Activated naive CD4-positive, alpha-beta T cell treated with anti-CD3 and anti-CD28 coated beads for 36 hours (primary cell): ENCODE measurements at regions of chr1 and their contacts with region 1.

Region 1: GRCh38 chr1:64744492-64745180 is at the start of gene RAVER2:
- DNase-seq: peak; percentile 78
- H3K4me3 Mint-ChIP-seq: peak within 1 kb of the TSS; percentile 80
- H3K27ac Mint-ChIP-seq: peak within 1 kb of the TSS; percentile 36
- H3K4me1 Mint-ChIP-seq: peaks cover 7% of the 10 kb centered on the region
- H3K27me3 Mint-ChIP-seq: peaks cover 3% of the 10 kb centered on the region
- total RNA-seq, gene RAVER2: 2.3 to 2.5 TPM

Region 2: DNA sequence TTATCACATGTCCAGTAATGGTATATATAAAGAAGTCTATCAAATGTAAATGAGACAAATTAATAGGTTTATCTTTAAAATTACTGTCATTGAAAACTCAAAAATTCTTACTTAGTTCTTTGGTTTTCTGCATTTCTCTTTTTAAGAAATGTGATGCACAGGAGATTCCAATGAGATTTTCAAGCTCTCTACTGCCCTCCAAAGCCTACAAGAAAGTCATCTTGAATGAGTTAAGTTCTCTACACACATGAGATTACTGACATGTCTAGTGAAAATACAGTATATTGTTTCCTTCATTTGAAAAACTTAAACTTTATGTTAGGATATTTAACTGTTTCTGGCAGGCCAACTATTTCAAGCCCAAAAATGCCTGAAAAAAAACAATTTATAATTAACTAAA is 1290.4 kb before region 1 on chr1:
- CTCF ChIA-PET with region 1: no interaction called
- intact Hi-C with region 1: no loop called
- DNase-seq: no peak
- H3K4me3 Mint-ChIP-seq: no peak overlapping the region
- H3K27ac Mint-ChIP-seq: no peak overlapping the region
- H3K4me1 Mint-ChIP-seq: no peaks in the 10 kb centered on the region
- H3K27me3 Mint-ChIP-seq: no peaks in the 10 kb centered on the region

Region 3: DNA sequence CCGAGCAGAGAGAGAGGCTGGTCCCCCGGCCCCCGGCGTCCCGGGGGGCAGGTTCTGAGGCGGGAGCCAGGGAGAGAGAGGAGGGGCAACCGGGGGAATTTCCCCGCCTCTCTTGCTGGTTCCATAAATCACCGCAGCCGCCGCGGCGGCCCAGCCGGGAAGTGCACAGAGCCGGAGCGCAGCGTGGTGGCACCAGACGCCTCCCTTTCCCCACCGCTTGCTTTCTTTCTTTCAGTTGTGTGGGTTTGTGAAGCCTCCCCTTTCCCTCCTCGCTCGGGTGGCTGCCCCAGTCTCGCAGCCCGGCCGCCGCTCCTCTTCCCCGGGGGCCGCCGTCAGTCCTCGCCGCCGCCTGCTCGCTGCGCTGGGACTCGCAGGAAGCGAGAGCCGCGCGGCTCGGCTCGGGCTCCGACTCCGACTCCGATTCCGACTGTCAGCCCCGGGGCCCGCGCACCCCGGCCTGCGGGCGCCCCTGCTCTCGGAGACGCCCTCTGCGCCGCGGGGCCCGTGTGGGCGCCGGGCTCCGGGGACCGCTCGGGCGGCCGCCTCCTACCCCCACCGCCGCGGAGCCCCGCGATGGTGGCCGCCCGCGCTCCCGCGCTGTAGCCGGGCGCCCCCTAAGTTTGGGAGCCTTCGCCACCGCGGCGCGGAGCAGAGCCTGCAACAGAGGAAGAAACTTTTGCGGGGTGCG is 274.5 kb before region 1 on chr1 and contains the start of gene CACHD1:
- CTCF ChIA-PET with region 1: no interaction called
- intact Hi-C with region 1: loop called (anchors 2 kb)
- DNase-seq: peak; percentile 86
- H3K4me3 Mint-ChIP-seq: peak within 1 kb of the TSS; percentile 78
- H3K27ac Mint-ChIP-seq: peak within 1 kb of the TSS; percentile 3
- H3K4me1 Mint-ChIP-seq: peaks cover 14% of the 10 kb centered on the region
- H3K27me3 Mint-ChIP-seq: peaks cover 27% of the 10 kb centered on the region
- total RNA-seq, gene CACHD1: 2.6 to 2.9 TPM

Region 4: GRCh38 chr1:64956733-64957441 is 212.3 kb after region 1 on chr1:
- CTCF ChIA-PET with region 1: no interaction called
- intact Hi-C with region 1: loop called (anchors 2 kb)
- DNase-seq: peak; percentile 79
- H3K4me3 Mint-ChIP-seq: no peak overlapping the region
- H3K27ac Mint-ChIP-seq: no peak overlapping the region
- H3K4me1 Mint-ChIP-seq: peaks cover 63% of the 10 kb centered on the region
- H3K27me3 Mint-ChIP-seq: no peaks in the 10 kb centered on the region

Region 5: GRCh38 chr1:65036545-65037180 is 292.0 kb after region 1 on chr1:
- CTCF ChIA-PET with region 1: no interaction called
- intact Hi-C with region 1: loop called (anchors 1 kb)
- DNase-seq: no peak
- H3K4me3 Mint-ChIP-seq: no peak overlapping the region
- H3K27ac Mint-ChIP-seq: no peak overlapping the region
- H3K4me1 Mint-ChIP-seq: peaks cover 11% of the 10 kb centered on the region
- H3K27me3 Mint-ChIP-seq: no peaks in the 10 kb centered on the region

Region 6: GRCh38 chr1:65097076-65097475 is 352.4 kb after region 1 on chr1:
- CTCF ChIA-PET with region 1: no interaction called
- intact Hi-C with region 1: no loop called
- DNase-seq: no peak
- H3K4me3 Mint-ChIP-seq: no peak overlapping the region
- H3K27ac Mint-ChIP-seq: no peak overlapping the region
- H3K4me1 Mint-ChIP-seq: no peaks in the 10 kb centered on the region
- H3K27me3 Mint-ChIP-seq: no peaks in the 10 kb centered on the region

Region 7: DNA sequence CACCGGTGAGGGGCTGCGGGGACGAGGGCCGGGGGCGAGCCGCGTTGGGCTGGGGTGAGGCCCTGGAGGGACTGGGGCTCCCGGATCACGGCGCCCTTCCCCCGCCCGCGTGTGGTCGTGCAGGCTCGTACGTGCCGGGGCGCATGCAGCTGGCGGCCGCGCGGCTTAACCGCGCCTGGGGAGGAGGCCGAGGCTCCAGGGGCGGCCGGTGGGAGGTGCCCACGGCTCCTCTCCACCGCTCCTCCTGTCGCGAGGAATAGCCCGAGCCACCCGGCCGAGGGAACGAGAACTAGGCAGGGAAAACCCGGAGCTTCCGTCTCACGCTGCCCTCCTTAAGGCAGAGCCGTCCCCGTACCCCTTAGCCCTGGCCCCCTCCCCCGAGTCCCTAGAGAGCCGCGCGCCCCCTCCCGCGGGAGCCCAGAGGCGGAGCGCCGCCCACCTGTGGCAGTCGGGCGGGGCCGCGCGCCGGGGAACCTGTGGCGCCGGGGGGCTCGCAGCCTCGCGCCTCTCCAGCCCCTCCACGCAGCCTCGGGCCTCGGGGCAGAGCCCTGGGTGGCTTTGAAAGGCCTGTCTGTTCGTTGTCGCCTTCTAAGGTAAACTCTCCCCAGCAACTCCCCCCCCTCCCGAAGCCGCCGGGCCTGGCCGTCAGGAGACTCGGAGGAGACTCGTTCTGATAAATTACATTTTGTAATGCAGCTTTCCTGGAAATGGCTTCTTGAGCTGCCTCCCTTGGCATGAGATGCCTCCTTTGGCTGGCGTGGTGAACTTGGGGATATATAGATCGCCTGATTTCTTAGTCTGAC is 404.1 kb after region 1 on chr1:
- CTCF ChIA-PET with region 1: no interaction called
- intact Hi-C with region 1: loop called (anchors 5 kb)
- DNase-seq: peak; percentile 41
- H3K4me3 Mint-ChIP-seq: peak overlapping the region; percentile 80
- H3K27ac Mint-ChIP-seq: no peak overlapping the region
- H3K4me1 Mint-ChIP-seq: peaks cover 10% of the 10 kb centered on the region
- H3K27me3 Mint-ChIP-seq: peaks cover 47% of the 10 kb centered on the region

Region 8: GRCh38 chr1:65254319-65255034 is 509.8 kb after region 1 on chr1:
- CTCF ChIA-PET with region 1: interaction called, 3 read pairs
- intact Hi-C with region 1: loop called (anchors 1 kb)
- DNase-seq: peak; percentile 88
- H3K4me3 Mint-ChIP-seq: peak overlapping the region; percentile 86
- H3K27ac Mint-ChIP-seq: no peak overlapping the region
- H3K4me1 Mint-ChIP-seq: peaks cover 16% of the 10 kb centered on the region
- H3K27me3 Mint-ChIP-seq: peaks cover 4% of the 10 kb centered on the region